ENCODE measurements at regions of chr10 and their contacts with region 1.

Region 1: DNA sequence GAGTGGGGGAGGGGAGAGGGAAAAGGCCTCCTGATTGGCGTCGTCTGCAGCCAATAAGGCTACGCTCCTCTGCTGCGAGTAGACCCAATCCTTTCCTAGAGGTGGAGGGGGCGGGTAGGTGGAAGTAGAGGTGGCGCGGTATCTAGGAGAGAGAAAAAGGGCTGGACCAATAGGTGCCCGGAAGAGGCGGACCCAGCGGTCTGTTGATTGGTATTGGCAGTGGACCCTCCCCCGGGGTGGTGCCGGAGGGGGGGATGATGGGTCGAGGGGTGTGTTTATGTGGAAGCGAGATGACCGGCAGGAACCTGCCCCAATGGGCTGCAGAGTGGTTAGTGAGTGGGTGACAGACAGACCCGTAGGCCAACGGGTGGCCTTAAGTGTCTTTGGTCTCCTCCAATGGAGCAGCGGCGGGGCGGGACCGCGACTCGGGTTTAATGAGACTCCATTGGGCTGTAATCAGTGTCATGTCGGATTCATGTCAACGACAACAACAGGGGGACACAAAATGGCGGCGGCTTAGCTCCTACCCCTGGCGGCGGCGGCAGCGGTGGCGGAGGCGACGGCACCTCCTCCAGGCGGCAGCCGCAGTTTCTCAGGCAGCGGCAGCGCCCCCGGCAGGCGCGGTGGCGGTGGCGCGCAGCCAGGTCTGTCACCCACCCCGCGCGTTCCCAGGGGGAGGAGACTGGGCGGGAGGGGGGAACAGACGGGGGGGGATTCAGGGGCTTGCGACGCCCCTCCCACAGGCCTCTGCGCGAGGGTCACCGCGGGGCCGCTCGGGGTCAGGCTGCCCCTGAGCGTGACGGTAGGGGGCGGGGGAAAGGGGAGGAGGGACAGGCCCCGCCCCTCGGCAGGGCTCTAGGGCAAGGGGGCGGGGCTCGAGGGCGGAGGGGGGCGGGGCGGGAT is at the start of gene KAT6B:
- DNase-seq: peak; percentile 100
- ATAC-seq: peak; percentile 96
- H3K4me3 ChIP-seq: peak within 1 kb of the TSS; percentile 92 to 95
- H3K27ac ChIP-seq: peak within 1 kb of the TSS; percentile 90
- H3K4me1 ChIP-seq: peaks cover 2 to 5% of the 10 kb centered on the region in 2 donors
- H3K27me3 ChIP-seq: no peaks in the 10 kb centered on the region
- total RNA-seq, gene KAT6B: 29.4 to 47.5 TPM

Region 2: DNA sequence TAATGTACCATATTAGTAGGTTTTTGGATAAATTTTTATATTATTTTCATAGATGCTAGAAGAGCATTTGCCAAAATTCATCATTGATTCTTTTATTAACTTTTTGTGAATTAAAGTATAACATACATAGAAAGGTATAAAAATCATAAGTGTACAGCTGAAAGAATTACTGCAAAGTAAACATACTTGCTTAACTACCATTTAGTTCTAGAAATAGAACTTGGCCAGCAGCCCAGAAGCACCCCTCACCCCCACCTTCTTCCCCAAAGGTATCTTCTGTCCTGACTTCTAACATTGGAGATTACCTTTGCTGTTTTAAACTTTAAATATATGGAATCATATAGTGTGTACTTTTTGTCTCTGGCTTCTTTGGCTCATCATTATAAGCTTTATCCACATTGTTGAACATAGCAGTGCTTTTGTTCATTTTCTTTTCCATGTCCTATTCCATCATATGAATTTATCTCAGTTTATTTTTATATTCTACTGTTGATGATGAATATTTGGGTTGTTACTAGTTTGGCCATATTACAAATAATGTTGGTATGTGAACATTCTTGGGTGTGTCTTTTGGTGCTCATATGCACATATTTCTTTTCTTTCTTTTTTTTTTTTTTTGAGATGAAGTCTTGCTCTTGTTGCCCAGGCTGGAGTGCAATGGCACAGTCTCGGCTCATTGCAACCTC is 532.6 kb before region 1 on chr10:
- intact Hi-C with region 1: loop called in 1 of 2 experiments (anchors 5 kb)
- DNase-seq: no peak
- ATAC-seq: peak; percentile 56
- H3K4me3 ChIP-seq: no peak overlapping the region
- H3K27ac ChIP-seq: peak overlapping the region in 1 of 2 donors; percentile 91
- H3K4me1 ChIP-seq: peaks cover 0 to 2% of the 10 kb centered on the region in 2 donors
- H3K27me3 ChIP-seq: no peaks in the 10 kb centered on the region

Region 3: DNA sequence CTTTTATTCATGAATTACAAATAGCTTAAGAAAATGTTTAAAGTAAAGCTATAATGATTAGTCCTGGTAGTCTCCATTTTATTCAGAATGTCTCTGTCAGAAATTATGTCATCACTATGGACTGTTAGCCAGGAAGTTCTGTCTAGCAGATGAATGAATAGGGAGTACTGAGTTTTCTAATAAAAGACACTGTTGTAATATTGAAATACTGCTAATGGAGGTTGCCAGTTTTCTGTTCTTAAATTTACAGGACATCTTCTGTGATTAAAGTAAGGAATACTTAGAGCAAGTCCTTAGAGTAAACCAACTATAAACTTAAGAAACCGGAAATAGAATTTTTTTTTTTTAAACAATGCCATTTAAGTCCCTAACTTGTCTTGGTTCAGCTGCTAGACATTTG is 365.6 kb before region 1 on chr10:
- intact Hi-C with region 1: no loop called
- DNase-seq: no peak
- ATAC-seq: no peak
- H3K4me3 ChIP-seq: no peak overlapping the region
- H3K27ac ChIP-seq: no peak overlapping the region
- H3K4me1 ChIP-seq: no peaks in the 10 kb centered on the region
- H3K27me3 ChIP-seq: no peaks in the 10 kb centered on the region

Region 4: GRCh38 chr10:74786088-74786487 is 40.3 kb before region 1 on chr10:
- intact Hi-C with region 1: no loop called
- DNase-seq: no peak
- ATAC-seq: no peak
- H3K4me3 ChIP-seq: no peak overlapping the region
- H3K27ac ChIP-seq: no peak overlapping the region
- H3K4me1 ChIP-seq: no peaks in the 10 kb centered on the region
- H3K27me3 ChIP-seq: no peaks in the 10 kb centered on the region

Region 5: GRCh38 chr10:74924251-74924951 is 98.0 kb after region 1 on chr10:
- intact Hi-C with region 1: loop called in 1 of 2 experiments (anchors 10 kb)
- DNase-seq: no peak
- ATAC-seq: peak; percentile 82
- H3K4me3 ChIP-seq: peak overlapping the region; percentile 14 to 34
- H3K27ac ChIP-seq: no peak overlapping the region
- H3K4me1 ChIP-seq: peaks cover 10 to 12% of the 10 kb centered on the region in 2 donors
- H3K27me3 ChIP-seq: no peaks in the 10 kb centered on the region

Region 6: DNA sequence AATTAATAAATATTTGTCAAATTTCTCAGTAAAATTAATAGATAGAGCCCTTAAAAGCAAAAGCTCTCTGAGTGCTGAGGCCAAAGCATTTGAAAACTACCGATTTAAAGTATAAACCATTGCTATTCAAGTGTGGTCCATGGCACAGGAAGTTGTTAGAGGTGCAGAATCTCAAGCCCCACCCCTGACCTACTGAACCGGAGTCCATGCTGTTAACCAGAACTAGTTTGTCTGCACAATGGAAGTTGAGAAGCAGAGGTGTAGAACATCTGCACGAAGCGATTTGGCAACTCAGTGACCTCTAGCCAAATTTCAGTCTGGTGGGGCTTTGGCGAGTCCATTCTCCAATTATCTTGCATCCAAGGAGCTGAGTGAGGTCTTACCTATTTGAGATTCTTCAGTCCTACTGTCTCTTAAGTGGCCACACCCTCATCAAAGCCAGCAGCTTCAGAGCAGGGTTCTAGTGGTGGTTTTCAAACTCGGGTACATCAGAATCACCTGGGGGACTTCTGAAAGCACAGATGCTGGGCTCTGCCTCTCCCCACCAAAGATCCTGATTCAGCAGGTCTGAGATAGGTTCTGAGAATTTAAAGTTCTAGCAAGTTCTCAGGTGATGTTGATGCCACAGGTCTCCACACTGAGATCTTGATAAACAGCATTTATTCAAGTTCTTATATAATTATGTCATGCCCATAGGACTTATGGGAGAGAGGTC is 188.3 kb after region 1 on chr10:
- intact Hi-C with region 1: no loop called
- DNase-seq: no peak
- ATAC-seq: no peak
- H3K4me3 ChIP-seq: no peak overlapping the region
- H3K27ac ChIP-seq: no peak overlapping the region
- H3K4me1 ChIP-seq: no peaks in the 10 kb centered on the region
- H3K27me3 ChIP-seq: no peaks in the 10 kb centered on the region